GM18951 (cell line): ENCODE measurements at regions of chr3 and their contacts with region 1.

Region 1: DNA sequence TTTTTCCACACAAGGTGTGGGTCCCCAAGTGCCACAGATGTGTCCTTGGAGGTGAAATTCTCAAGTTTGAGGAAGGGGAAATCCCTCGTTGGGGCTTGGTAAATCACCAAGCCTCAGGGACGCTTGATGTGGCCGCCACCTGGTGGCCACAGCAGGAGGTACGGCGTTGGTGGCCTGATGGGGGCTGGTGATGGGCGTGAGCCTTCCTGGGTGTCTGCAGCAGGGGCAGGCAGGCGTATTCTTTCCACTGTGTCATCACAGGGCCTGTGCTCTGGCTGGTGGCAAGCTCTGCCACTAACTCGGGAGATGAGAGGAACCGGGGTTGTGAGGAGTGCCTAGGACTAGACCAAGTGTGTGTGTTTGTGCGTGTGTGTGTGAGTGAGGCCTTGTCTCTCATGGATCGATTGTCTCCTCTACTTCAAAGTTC is 4.2 kb downstream of the ACOX2 start:
- POLR2A ChIP-seq: no peak

Region 2: DNA sequence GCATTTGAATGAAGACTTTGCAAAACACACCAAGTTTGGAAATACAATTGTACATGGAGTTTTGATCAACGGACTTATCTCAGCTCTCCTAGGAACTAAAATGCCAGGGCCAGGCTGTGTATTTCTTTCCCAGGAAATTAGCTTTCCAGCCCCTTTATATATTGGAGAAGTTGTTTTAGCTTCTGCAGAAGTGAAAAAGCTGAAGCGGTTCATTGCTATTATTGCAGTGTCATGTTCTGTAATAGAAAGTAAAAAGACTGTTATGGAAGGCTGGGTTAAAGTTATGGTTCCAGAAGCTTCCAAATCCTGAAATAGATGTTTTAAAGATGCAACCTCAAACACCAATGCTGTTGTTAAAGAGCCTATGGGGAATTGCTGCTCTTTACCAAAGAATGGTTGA is 215.0 kb before region 1 on chr3:
- in situ Hi-C with region 1: loop called (anchors 10 kb)
- POLR2A ChIP-seq: no peak

Region 3: GRCh38 chr3:58383904-58384303 is 148.9 kb before region 1 on chr3:
- in situ Hi-C with region 1: no loop called
- POLR2A ChIP-seq: no peak

Region 4: GRCh38 chr3:58751882-58752567 is 219.2 kb after region 1 on chr3:
- in situ Hi-C with region 1: no loop called
- POLR2A ChIP-seq: no peak

Region 5: GRCh38 chr3:58888087-58888486 is 355.3 kb after region 1 on chr3:
- in situ Hi-C with region 1: no loop called
- POLR2A ChIP-seq: no peak

Region 6: GRCh38 chr3:60514866-60515265 is 1982.1 kb after region 1 on chr3:
- in situ Hi-C with region 1: no loop called
- POLR2A ChIP-seq: no peak